ENCODE measurements at regions of chr4 and their contacts with region 1.

Region 1: DNA sequence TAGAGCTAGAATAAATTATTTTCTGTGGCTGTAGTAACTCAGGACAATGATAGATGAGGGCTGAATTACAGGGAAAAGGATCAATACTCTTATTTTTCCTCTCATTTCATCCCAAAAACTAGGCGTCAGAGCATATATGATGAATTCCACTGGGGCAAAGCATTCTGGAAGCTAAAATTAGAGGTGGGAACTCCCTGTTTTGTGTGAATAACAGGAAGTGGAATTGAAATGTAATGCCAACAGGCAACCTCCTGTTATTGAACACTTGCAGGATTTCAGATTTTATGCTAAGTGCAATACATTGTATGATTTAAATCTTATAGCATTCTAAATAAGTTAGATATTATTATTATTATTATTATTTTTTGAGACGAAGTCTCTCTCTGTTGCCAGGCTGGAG is 20.9 kb downstream of the HSD17B11 start:
- DNase-seq: no peak
- H3K4me3 ChIP-seq: no peak overlapping the region
- H3K27ac ChIP-seq: no peak overlapping the region
- H3K4me1 ChIP-seq: no peaks in the 10 kb centered on the region
- H3K27me3 ChIP-seq: no peaks in the 10 kb centered on the region
- CTCF ChIP-seq: no peak
- EP300 ChIP-seq: no peak
- POLR2A ChIP-seq: no peak

Region 2: GRCh38 chr4:87038837-87039615 is 331.0 kb before region 1 on chr4:
- intact Hi-C with region 1: no loop called
- DNase-seq: peak in 1 of 5 donors; percentile 61
- H3K4me3 ChIP-seq: no peak overlapping the region
- H3K27ac ChIP-seq: peak overlapping the region in 1 of 2 donors; percentile 35
- H3K4me1 ChIP-seq: peaks cover 29% of the 10 kb centered on the region
- H3K27me3 ChIP-seq: no peaks in the 10 kb centered on the region
- CTCF ChIP-seq: no peak
- EP300 ChIP-seq: no peak
- POLR2A ChIP-seq: no peak

Region 3: DNA sequence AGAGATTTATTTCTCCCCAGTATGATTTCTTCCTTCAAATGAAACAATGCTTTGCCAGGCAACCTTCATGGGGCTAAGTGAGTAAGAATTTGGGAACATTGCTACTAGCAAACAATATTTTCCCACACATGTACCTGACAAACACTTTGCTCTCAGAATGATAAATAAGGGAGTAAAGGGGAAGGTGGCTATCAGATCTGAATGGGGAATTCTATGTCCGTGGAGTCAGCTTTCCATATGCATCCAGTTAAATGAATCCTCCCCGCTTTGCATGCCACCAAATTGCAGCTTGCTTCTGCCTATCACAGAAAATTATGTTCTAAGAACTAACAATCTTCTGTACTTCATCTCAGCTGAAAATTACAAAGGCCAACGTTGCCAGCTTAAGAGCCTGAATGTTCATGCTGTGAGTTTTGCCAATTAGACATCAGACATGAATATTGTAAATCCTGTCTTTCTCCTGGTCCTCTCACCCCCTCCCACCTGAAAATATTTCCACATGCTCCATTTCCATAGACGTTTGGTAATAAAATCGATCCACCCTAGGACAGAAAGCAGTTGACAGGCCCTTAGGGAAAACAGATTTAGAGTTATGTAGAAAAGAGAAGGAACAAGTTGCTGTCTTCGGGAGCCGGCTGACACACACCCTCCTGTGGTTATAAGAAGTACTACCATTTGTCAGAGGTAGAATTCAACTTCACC is 469.0 kb after region 1 on chr4:
- intact Hi-C with region 1: loop called in 2 of 4 experiments (anchors 5 to 10 kb)
- DNase-seq: peak in 1 of 5 donors; percentile 25
- H3K4me3 ChIP-seq: no peak overlapping the region
- H3K27ac ChIP-seq: no peak overlapping the region
- H3K4me1 ChIP-seq: no peaks in the 10 kb centered on the region
- H3K27me3 ChIP-seq: no peaks in the 10 kb centered on the region
- CTCF ChIP-seq: peak; percentile 38 to 59 (median 54)
- EP300 ChIP-seq: no peak
- POLR2A ChIP-seq: no peak

Region 4: DNA sequence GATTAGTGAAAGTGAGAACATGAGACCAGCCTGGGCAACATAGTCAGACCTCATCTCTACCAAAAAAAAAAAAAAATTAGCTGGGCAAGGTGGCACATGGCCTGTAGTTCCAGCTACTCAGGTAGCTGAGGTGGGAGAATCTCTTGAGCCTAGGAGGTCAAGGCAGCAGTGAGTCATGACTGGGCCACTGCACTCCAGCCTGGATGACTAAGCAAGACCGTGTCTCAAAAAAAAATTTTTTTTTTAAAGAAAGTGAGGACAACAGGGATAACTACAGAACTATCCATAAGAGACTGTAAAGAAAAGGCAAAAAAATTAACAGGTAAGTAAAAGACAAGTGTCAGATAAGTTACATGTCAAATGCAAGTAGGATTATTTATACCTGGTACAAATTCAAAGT is 591.9 kb after region 1 on chr4:
- intact Hi-C with region 1: no loop called
- DNase-seq: no peak
- H3K4me3 ChIP-seq: no peak overlapping the region
- H3K27ac ChIP-seq: no peak overlapping the region
- H3K4me1 ChIP-seq: no peaks in the 10 kb centered on the region
- H3K27me3 ChIP-seq: no peaks in the 10 kb centered on the region
- CTCF ChIP-seq: no peak
- EP300 ChIP-seq: no peak
- POLR2A ChIP-seq: no peak

Measured in ovary (tissue), 10 donors.